ENCODE measurements at regions of chr12 and their contacts with region 1.

Region 1: DNA sequence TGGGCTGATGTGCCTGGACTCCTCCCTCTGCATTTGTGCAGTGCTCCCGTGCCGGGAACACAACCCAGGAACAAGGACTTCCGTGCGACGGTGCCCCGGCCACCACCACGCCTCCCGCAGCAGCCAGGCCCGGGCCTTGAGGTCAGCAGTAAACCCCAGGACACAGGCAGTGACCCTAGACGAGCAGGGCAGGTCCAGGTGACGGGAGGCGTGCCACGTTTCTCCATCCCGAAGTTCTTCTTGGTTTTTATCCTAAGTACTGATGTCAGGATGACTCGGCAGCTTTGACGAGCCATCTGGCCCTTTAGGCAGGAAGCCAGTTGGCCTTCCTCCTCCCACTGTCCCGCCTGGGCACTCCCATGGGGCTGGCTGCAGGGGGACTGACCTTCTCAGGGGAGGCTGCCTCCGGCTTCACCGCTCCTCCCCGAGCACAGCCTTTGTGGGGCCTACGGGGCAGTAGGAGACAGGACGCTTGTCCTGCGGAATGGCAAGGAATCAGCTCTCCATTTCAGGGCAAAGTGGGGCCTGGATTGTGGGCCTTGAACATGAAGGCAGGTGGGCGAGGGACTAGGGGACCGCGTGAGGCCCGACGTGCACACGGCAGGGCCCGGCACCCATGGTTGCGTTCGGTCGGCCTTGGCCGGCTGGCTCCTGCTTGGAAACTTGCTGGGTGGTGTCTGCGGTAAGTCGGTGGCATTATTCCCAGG is 94.1 kb downstream of the FBXL14 start:
- DNase-seq: no peak

Region 2: GRCh38 chr12:271170-271569 is 1229.1 kb before region 1 on chr12:
- intact Hi-C with region 1: loop called in 1 of 2 experiments (anchors 5 kb)
- DNase-seq: no peak

Region 3: DNA sequence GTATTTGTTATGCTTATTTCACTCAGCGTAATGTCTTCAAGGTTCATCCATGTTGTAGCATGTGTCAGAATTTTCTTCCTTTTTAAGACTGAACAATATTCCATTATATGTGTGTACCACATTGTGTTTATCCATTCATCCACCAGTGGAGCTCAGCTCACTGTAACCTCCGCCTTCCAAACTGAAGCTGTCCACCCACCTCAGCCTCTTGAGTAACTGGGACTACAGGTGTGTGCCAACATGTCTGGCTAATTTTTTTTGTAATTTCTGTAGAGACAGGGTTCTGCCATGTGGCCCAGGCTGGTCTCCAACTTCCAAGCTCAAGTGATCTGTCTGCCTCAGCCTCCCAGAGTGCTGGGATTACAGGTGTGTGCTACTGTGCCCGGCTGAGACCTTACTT is 1077.7 kb before region 1 on chr12:
- intact Hi-C with region 1: loop called in 1 of 2 experiments (anchors 5 kb)
- DNase-seq: no peak